Activated CD4-positive, alpha-beta memory T cell treated with anti-CD3 and anti-CD28 coated beads, Interleukin-2, amount 10 ng/mL, durations not matched to agents 7 days and 5 days (primary cell): ENCODE measurements at regions of chr16 and their contacts with region 1.

Region 1: GRCh38 chr16:648781-649589 is at the start of gene WDR90:
- DNase-seq: peak; percentile 95
- H3K4me3 Mint-ChIP-seq: peak within 1 kb of the TSS; percentile 75
- H3K27ac Mint-ChIP-seq: peak within 1 kb of the TSS; percentile 64
- H3K4me1 Mint-ChIP-seq: peaks cover 28% of the 10 kb centered on the region
- H3K27me3 Mint-ChIP-seq: no peaks in the 10 kb centered on the region
- total RNA-seq, gene WDR90: 58.0 to 58.4 TPM

Region 2: GRCh38 chr16:636206-637080 is 12.5 kb before region 1 on chr16 and contains the start of gene METTL26:
- CTCF ChIA-PET with region 1: interaction called, 9 read pairs
- POLR2A ChIA-PET with region 1: interaction called, 18 read pairs
- DNase-seq: peak; percentile 94
- H3K4me3 Mint-ChIP-seq: peak within 1 kb of the TSS; percentile 89
- H3K27ac Mint-ChIP-seq: peak within 1 kb of the TSS; percentile 98
- H3K4me1 Mint-ChIP-seq: peaks cover 12% of the 10 kb centered on the region
- H3K27me3 Mint-ChIP-seq: no peaks in the 10 kb centered on the region
- total RNA-seq, gene METTL26: 66.6 to 67.5 TPM